IMR-90 (cell line): ENCODE measurements at regions of chr10 and their contacts with region 1.

Region 1: DNA sequence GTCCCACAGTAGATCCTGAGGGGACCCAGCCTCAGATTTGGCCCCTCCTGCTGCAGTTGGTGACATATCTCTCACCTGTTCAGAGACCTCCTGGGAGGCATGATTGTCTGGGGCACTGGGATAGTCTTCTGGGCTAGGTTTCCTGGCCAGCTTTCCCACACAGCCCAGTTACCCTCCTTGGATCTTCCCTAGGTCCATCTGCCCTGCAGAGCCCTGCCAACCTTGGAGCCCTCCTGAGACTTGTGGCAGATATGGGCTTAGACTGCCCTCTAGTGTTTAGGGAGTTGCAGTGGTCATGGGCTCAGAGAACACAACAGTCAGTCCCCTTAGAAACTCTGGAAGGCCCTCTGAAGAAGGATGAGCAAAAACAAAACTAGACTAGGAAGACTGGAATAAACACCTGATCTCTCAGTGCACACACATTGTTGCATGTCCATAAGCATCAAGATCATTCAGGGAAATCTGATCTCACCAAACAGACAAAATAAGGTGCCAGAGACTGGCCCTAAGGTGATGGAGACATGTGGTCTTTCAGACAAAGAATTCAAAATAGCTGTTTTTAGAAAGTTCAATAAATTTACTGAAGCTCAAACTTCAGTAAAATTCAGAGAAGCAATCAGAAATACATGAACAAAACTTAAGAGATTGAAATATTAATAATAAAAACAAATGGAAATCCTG is 324.6 kb downstream of the ATRNL1 start:
- DNase-seq: peak; percentile 37
- ATAC-seq: peak; percentile 84
- H3K4me3 ChIP-seq: no peak overlapping the region
- H3K27ac ChIP-seq: no peak overlapping the region
- H3K4me1 ChIP-seq: no peaks in the 10 kb centered on the region
- H3K27me3 ChIP-seq: no peaks in the 10 kb centered on the region
- CTCF ChIP-seq: peak; percentile 55
- POLR2A ChIP-seq: no peak
- RAD21 ChIP-seq: peak; percentile 66

Region 2: GRCh38 chr10:114623661-114624294 is 793.9 kb before region 1 on chr10:
- CTCF ChIA-PET with region 1: no interaction called
- POLR2A ChIA-PET with region 1: no interaction called
- dilution Hi-C with region 1: no loop called
- in situ Hi-C with region 1: no loop called
- intact Hi-C with region 1: no loop called
- DNase-seq: peak; percentile 88
- ATAC-seq: peak; percentile 91
- H3K4me3 ChIP-seq: no peak overlapping the region
- H3K27ac ChIP-seq: peak overlapping the region; percentile 67; the same call in 1 of the 2 replicates
- H3K4me1 ChIP-seq: peaks cover 14% of the 10 kb centered on the region
- H3K27me3 ChIP-seq: 0 out of 2 replicates have a peak, but pooled peaks cover 2% of the 10 kb centered on the region
- CTCF ChIP-seq: no peak
- POLR2A ChIP-seq: no peak
- RAD21 ChIP-seq: no peak

Region 3: GRCh38 chr10:115141254-115141653 is 276.5 kb before region 1 on chr10:
- CTCF ChIA-PET with region 1: interaction called, 4 read pairs
- POLR2A ChIA-PET with region 1: no interaction called
- dilution Hi-C with region 1: no loop called
- in situ Hi-C with region 1: no loop called
- intact Hi-C with region 1: loop called (anchors 1 kb)
- DNase-seq: peak; percentile 12
- ATAC-seq: no peak
- H3K4me3 ChIP-seq: no peak overlapping the region
- H3K27ac ChIP-seq: no peak overlapping the region
- H3K4me1 ChIP-seq: no peaks in the 10 kb centered on the region
- H3K27me3 ChIP-seq: no peaks in the 10 kb centered on the region
- CTCF ChIP-seq: peak; percentile 46
- POLR2A ChIP-seq: no peak
- RAD21 ChIP-seq: peak; percentile 36

Region 4: DNA sequence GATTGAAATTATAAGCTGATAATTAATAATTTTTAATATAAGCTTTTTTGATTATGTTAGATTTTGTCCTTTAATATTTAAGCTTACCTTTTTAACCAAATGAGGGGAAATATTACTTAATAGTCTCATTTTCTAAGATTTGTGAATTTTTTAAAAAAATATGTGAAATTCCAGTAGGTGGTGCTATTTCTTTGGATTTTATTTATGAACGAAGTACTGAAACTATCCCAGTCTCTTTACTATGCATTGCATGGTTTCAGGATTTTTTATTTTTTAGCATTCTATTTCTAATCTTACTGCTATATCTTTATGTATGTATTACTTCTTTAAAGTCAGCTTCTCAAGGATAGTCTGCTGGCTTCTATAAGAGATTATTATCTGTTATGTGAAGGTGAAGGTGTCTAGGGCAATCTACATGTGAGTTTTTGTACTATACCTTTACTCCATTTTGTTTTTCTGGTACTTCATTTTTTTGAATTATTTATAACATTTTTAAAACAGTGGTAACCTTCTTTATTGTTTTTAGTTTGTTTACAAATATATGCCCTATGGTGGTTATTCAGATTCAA is 246.2 kb before region 1 on chr10:
- CTCF ChIA-PET with region 1: interaction called, 3 read pairs
- POLR2A ChIA-PET with region 1: no interaction called
- dilution Hi-C with region 1: no loop called
- in situ Hi-C with region 1: no loop called
- intact Hi-C with region 1: loop called (anchors 2 kb)
- DNase-seq: no peak
- ATAC-seq: no peak
- H3K4me3 ChIP-seq: no peak overlapping the region
- H3K27ac ChIP-seq: no peak overlapping the region
- H3K4me1 ChIP-seq: no peaks in the 10 kb centered on the region
- H3K27me3 ChIP-seq: no peaks in the 10 kb centered on the region
- CTCF ChIP-seq: peak; percentile 49
- POLR2A ChIP-seq: no peak
- RAD21 ChIP-seq: no peak

Region 5: GRCh38 chr10:115355162-115355760 is 62.5 kb before region 1 on chr10:
- CTCF ChIA-PET with region 1: no interaction called
- POLR2A ChIA-PET with region 1: no interaction called
- dilution Hi-C with region 1: no loop called
- in situ Hi-C with region 1: no loop called
- intact Hi-C with region 1: loop called (anchors 1 kb)
- DNase-seq: peak; percentile 63
- ATAC-seq: peak; percentile 66
- H3K4me3 ChIP-seq: no peak overlapping the region
- H3K27ac ChIP-seq: no peak overlapping the region
- H3K4me1 ChIP-seq: no peaks in the 10 kb centered on the region
- H3K27me3 ChIP-seq: no peaks in the 10 kb centered on the region
- CTCF ChIP-seq: peak; percentile 79
- POLR2A ChIP-seq: no peak
- RAD21 ChIP-seq: peak; percentile 82